B cell (primary cell): ENCODE measurements at regions of chr11 and their contacts with region 1.

Region 1: DNA sequence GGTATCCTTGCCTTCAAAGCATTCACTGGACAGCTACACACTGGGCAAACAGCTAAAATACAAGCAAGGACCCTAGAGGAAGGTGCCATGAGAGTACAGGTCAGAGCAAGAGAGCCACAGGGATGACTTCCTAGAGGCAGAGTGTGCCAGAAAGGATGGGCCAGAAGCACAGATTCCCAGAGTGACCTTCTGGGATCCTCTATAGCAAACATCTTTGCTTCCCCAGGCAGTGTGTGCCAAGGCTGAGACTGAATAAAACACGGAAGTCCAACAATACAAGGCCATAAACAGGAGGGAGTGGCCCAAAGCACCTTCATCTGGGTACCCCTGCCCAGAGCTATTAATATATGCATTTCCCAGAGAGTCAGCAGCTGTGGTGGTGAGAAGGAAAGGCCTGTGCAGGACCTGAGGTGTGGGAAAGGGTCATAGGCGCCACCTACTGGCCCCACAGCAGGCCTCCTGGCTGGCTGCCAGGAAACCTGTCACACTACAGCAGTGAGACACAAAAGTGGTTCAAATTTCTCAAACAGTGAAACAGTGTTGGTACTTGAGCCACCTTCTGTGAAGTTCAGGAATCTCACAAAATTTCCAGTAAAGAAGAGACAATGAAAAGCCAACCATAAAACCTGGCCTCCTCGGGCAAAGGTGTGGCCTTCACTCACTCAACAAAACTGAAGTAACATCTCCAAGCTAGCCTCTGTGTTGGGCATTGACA is 20.3 kb downstream of the CLPB start:
- DNase-seq: peak; percentile 81
- ATAC-seq: no peak
- H3K4me3 ChIP-seq: no peak overlapping the region
- H3K4me3 Mint-ChIP-seq: no peak overlapping the region
- H3K27ac ChIP-seq: no peak overlapping the region
- H3K27ac Mint-ChIP-seq: peak overlapping the region; percentile 60
- H3K4me1 ChIP-seq: peaks cover 12 to 27% of the 10 kb centered on the region in 2 donors
- H3K4me1 Mint-ChIP-seq: peaks cover 43% of the 10 kb centered on the region
- H3K27me3 ChIP-seq: no peaks in the 10 kb centered on the region
- H3K27me3 Mint-ChIP-seq: no peaks in the 10 kb centered on the region
- CTCF ChIP-seq: peak; percentile 81

Region 2: GRCh38 chr11:71951741-71952310 is 462.2 kb before region 1 on chr11:
- CTCF ChIA-PET with region 1: no interaction called
- POLR2A ChIA-PET with region 1: no interaction called
- intact Hi-C with region 1: no loop called
- DNase-seq: no peak
- ATAC-seq: no peak
- H3K4me3 ChIP-seq: no peak overlapping the region
- H3K4me3 Mint-ChIP-seq: no peak overlapping the region
- H3K27ac ChIP-seq: no peak overlapping the region
- H3K27ac Mint-ChIP-seq: no peak overlapping the region
- H3K4me1 ChIP-seq: no peaks in the 10 kb centered on the region
- H3K4me1 Mint-ChIP-seq: peaks cover 22% of the 10 kb centered on the region
- H3K27me3 ChIP-seq: no peaks in the 10 kb centered on the region
- H3K27me3 Mint-ChIP-seq: no peaks in the 10 kb centered on the region
- CTCF ChIP-seq: no peak

Region 3: DNA sequence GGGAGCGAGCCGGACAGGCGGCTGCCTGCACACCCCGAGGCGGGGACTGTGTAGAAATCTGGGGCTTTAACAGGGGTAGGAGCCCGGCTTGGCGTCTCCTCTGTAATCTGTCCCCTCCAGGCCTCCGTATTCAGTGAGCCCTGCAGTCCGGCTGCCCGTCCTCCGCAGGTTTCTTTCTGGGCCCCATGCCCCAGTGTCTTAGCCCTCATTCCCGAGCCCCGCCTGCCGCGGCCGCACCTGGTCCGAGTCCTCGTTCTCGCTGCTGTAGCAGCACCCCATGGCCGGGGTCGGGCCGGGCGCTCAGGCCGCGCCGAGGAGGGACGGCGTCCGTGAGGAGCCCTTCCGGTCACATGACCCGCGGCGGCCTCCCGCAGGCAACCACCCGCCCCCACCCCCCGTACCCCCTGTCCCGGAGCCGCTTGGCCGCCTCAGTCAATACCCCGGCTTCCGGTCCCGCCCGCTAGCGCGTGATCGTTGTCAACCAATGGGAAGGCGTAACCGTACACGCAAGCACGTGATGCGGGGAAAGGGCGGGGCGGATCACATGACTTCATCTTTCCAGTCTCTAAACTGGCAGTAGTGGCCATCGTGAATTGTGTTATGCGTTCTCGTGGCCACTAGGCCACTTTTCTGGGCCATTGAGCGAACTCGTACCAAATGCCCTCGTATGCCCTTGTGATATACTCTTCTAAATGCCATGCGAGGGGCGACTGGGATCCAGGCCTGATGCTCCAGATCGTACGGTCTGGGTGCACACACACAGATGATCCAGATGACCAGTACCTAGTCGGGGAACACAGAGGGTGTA is 310.9 kb before region 1 on chr11 and contains the start of gene LAMTOR1:
- CTCF ChIA-PET with region 1: no interaction called
- POLR2A ChIA-PET with region 1: no interaction called
- intact Hi-C with region 1: loop called (anchors 1 kb)
- DNase-seq: peak; percentile 98
- ATAC-seq: peak; percentile 95
- H3K4me3 ChIP-seq: peak within 1 kb of the TSS; percentile 76 to 98 (median 84)
- H3K4me3 Mint-ChIP-seq: peak within 1 kb of the TSS; percentile 95
- H3K27ac ChIP-seq: peak within 1 kb of the TSS; percentile 94 to 96
- H3K27ac Mint-ChIP-seq: peak within 1 kb of the TSS; percentile 99
- H3K4me1 ChIP-seq: peaks cover 29 to 37% of the 10 kb centered on the region in 2 donors
- H3K4me1 Mint-ChIP-seq: peaks cover 41% of the 10 kb centered on the region
- H3K27me3 ChIP-seq: no peaks in the 10 kb centered on the region
- H3K27me3 Mint-ChIP-seq: no peaks in the 10 kb centered on the region
- CTCF ChIP-seq: peak; percentile 20
- total RNA-seq, gene LAMTOR1: 71.0 and 78.4 TPM in 2 replicates

Region 4: DNA sequence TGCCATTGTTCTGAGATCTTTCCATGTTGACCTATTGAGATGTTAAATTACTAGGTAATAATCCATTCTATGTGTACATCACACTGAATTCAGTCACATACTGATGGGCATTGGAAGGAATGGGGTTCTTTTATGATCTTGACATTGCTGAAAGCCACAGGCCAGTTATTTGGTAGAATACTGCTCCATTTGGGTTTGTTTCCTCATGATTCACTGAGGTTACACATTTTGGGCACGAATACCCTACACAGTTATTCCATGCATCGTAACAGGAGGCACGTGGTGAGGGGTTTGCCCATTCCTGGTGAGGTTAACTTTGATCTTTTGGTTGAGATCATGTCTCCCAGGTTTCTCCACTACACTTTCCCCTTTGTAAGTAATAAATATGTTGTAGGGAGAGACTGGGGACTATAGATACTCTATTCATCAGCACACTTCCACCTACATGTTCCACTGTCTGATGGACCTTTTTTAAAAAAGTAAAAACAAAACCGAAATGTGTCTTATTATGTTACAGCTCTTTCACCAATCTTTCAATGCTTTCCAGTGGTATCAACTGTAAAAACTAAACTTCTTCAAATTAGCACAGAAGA is 234.2 kb before region 1 on chr11:
- CTCF ChIA-PET with region 1: interaction called, 11 read pairs
- POLR2A ChIA-PET with region 1: no interaction called
- intact Hi-C with region 1: no loop called
- DNase-seq: no peak
- ATAC-seq: no peak
- H3K4me3 ChIP-seq: no peak overlapping the region
- H3K4me3 Mint-ChIP-seq: no peak overlapping the region
- H3K27ac ChIP-seq: no peak overlapping the region
- H3K27ac Mint-ChIP-seq: no peak overlapping the region
- H3K4me1 ChIP-seq: no peaks in the 10 kb centered on the region
- H3K4me1 Mint-ChIP-seq: peaks cover 1% of the 10 kb centered on the region
- H3K27me3 ChIP-seq: peaks cover 0 to 16% (median 1%) of the 10 kb centered on the region in 4 experiments
- H3K27me3 Mint-ChIP-seq: peaks cover 25% of the 10 kb centered on the region
- CTCF ChIP-seq: no peak

Region 5: DNA sequence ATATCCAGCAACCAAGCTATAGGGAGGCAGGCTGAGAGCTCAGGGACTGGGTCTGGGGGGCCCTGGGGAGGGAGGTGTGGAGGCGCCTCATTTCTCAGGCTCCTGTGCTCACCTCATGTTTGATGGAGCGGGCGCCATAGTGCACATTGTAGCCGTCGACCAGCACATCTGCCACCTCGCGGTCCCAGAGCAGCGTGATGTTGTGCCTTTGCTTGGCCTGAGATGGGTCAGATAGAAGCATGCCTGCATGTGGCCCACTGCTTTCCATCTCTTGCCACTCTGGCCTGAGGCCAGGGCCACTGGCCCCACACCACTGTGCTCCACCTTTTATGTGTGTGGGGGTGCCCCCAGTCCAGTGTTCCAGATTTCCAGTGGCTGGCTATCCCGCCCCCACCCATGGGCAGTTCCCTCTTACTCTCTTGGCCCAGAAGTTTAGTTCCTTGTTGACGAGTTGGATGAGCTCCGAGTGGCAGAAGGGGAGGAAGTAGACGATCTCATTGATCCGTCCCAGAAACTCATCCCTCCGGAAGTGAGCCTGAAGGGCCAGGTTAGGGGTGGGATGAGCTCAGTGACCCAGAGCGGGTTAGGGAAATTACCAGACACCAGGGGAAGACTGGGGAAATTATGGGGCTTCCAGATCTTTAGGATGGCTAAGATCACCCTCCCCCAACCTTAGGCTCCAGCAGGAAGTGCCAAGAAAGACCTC is 120.0 kb before region 1 on chr11:
- CTCF ChIA-PET with region 1: interaction called, 13 read pairs
- POLR2A ChIA-PET with region 1: no interaction called
- intact Hi-C with region 1: loop called (anchors 1 kb)
- DNase-seq: no peak
- ATAC-seq: no peak
- H3K4me3 ChIP-seq: no peak overlapping the region
- H3K4me3 Mint-ChIP-seq: no peak overlapping the region
- H3K27ac ChIP-seq: no peak overlapping the region
- H3K27ac Mint-ChIP-seq: no peak overlapping the region
- H3K4me1 ChIP-seq: peaks cover 9 to 15% of the 10 kb centered on the region in 2 donors
- H3K4me1 Mint-ChIP-seq: peaks cover 20% of the 10 kb centered on the region
- H3K27me3 ChIP-seq: no peaks in the 10 kb centered on the region
- H3K27me3 Mint-ChIP-seq: no peaks in the 10 kb centered on the region
- CTCF ChIP-seq: no peak

Region 6: GRCh38 chr11:72446902-72447769 is 33.1 kb after region 1 on chr11:
- CTCF ChIA-PET with region 1: interaction called, 18 read pairs
- POLR2A ChIA-PET with region 1: no interaction called
- intact Hi-C with region 1: no loop called
- DNase-seq: peak; percentile 67
- ATAC-seq: peak; percentile 60
- H3K4me3 ChIP-seq: no peak overlapping the region
- H3K4me3 Mint-ChIP-seq: no peak overlapping the region
- H3K27ac ChIP-seq: no peak overlapping the region
- H3K27ac Mint-ChIP-seq: no peak overlapping the region
- H3K4me1 ChIP-seq: no peaks in the 10 kb centered on the region
- H3K4me1 Mint-ChIP-seq: peaks cover 5% of the 10 kb centered on the region
- H3K27me3 ChIP-seq: peaks cover 0 to 3% (median 0%) of the 10 kb centered on the region in 4 experiments
- H3K27me3 Mint-ChIP-seq: peaks cover 23% of the 10 kb centered on the region
- CTCF ChIP-seq: peak; percentile 89

Region 7: GRCh38 chr11:72460091-72460647 is 46.1 kb after region 1 on chr11:
- CTCF ChIA-PET with region 1: no interaction called
- POLR2A ChIA-PET with region 1: no interaction called
- intact Hi-C with region 1: no loop called
- DNase-seq: no peak
- ATAC-seq: no peak
- H3K4me3 ChIP-seq: no peak overlapping the region
- H3K4me3 Mint-ChIP-seq: no peak overlapping the region
- H3K27ac ChIP-seq: no peak overlapping the region
- H3K27ac Mint-ChIP-seq: no peak overlapping the region
- H3K4me1 ChIP-seq: no peaks in the 10 kb centered on the region
- H3K4me1 Mint-ChIP-seq: no peaks in the 10 kb centered on the region
- H3K27me3 ChIP-seq: peaks cover 0 to 16% (median 6%) of the 10 kb centered on the region in 4 experiments
- H3K27me3 Mint-ChIP-seq: peaks cover 28% of the 10 kb centered on the region
- CTCF ChIP-seq: no peak